ENCODE measurements at regions of chr1 and their contacts with region 1.

Region 1: DNA sequence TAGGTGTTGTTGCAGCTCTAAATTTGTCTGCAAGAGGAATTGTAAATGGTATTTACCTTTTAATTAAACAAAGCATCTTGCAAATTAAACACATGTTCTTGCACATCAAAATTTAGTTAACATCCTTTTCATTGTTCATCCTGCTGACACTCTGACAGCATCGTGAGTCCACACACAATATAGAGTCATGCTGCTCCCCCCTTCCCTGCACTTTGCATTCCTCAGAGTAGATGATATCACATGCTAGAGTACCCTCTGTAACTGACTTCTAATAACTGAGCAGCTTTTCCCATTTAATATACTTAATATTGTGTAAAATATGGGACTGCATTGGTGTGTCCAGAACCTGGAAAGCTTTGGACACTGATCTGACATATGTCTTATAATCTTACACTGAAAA is 138.8 kb upstream of the DPYD start:
- DNase-seq: no peak
- H3K4me3 ChIP-seq: no peak overlapping the region
- H3K27ac ChIP-seq: no peak overlapping the region
- H3K4me1 ChIP-seq: no peaks in the 10 kb centered on the region
- H3K27me3 ChIP-seq: no peaks in the 10 kb centered on the region
- CTCF ChIP-seq: no peak

Region 2: GRCh38 chr1:97938285-97938642 is 121.4 kb before region 1 on chr1:
- intact Hi-C with region 1: no loop called
- DNase-seq: no peak
- H3K4me3 ChIP-seq: no peak overlapping the region
- H3K27ac ChIP-seq: no peak overlapping the region
- H3K4me1 ChIP-seq: no peaks in the 10 kb centered on the region
- H3K27me3 ChIP-seq: no peaks in the 10 kb centered on the region
- CTCF ChIP-seq: no peak

Region 3: DNA sequence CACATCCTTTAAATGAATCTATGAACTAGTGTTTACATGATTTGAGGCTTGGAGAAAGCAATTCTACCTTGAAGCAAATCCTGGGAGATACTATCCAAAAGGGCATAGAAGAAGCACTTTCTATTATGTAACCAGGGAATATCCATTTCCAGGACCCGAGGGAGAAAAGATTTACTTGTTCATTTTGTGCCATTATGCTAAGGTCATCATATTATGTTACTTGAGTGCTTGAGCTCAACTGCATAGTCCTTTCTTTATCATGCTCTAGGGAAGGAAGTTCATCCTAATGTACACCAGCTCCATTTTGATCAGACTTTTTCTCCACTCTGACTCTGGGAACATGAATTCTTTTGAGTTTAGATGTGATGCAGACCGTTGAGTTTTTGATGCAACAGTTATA is 413.3 kb after region 1 on chr1:
- intact Hi-C with region 1: loop called (anchors 5 kb)
- DNase-seq: no peak
- H3K4me3 ChIP-seq: no peak overlapping the region
- H3K27ac ChIP-seq: no peak overlapping the region
- H3K4me1 ChIP-seq: no peaks in the 10 kb centered on the region
- H3K27me3 ChIP-seq: no peaks in the 10 kb centered on the region
- CTCF ChIP-seq: no peak